ENCODE measurements at regions of chr19 and their contacts with region 1.

Region 1: GRCh38 chr19:3557461-3558248 is at the start of gene MFSD12:
- DNase-seq: peak; percentile 92 to 95 (median 92)
- H3K4me3 ChIP-seq: peak within 1 kb of the TSS; percentile 89 to 98 (median 90)
- H3K4me3 Mint-ChIP-seq: peak within 1 kb of the TSS; percentile 100
- H3K27ac ChIP-seq: peak within 1 kb of the TSS; percentile 96
- H3K27ac Mint-ChIP-seq: peak within 1 kb of the TSS; percentile 93 to 98 (median 96)
- H3K4me1 ChIP-seq: peaks cover 53 to 60% of the 10 kb centered on the region in 2 donors
- H3K4me1 Mint-ChIP-seq: peaks cover 52% of the 10 kb centered on the region
- H3K27me3 ChIP-seq: no peaks in the 10 kb centered on the region
- H3K27me3 Mint-ChIP-seq: peaks cover 0 to 4% (median 0%) of the 10 kb centered on the region in 3 donors
- CTCF ChIP-seq: no peak
- polyA plus RNA-seq, gene MFSD12: 47.9 to 150 (median 55.5) TPM

Region 2: DNA sequence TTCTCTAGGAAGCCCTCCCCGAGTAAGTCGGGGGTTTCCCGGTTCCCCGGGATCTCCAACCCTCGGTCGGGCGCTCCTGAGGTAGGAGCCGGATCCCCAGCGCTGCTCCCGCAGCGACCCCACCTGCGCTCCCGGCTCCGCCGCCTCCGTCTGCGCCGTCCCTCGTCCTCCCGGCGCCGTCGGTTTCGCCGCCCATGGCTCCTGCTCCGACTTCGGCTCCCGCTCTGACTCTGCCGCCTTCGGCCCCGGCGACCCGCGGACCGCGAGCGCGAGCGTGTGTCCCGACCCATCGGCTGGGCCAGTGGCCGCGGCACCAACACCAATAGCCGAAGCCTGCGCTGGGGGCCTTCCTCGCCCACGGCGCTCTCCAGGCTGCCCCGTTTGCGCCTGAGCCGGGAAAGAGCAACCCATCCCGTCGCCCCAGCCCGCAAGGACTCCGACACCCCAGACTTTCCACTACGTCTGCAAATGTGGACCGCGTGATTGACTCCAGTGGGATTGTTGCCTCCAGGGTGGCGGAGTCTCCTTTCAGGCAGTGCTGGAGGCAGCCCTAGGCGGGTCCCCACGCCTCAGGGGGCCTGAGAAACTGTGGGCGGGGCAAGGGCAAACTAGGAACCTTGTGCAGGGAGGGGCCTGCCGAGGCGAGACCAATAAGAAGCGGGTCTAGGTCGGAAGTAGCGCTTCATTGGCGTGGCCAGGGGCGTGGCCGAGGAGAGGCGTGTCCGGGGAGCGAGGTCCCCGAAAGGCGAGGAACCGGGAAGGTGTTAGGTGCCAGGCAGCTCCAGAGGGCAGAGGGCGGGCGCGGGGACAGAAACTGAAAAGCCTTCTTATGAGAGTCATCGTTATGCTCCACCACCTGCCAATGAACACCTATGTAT is 69.1 kb after region 1 on chr19 and contains the start of gene CACTIN:
- intact Hi-C with region 1: loop called in 1 of 2 experiments (anchors 5 kb)
- DNase-seq: peak; percentile 98
- H3K4me3 ChIP-seq: peak within 1 kb of the TSS; percentile 64 to 98 (median 92)
- H3K4me3 Mint-ChIP-seq: peak within 1 kb of the TSS; percentile 95 to 98
- H3K27ac ChIP-seq: peak within 1 kb of the TSS; percentile 87 to 91
- H3K27ac Mint-ChIP-seq: peak within 1 kb of the TSS; percentile 96 to 99 (median 99)
- H3K4me1 ChIP-seq: peaks cover 17 to 25% of the 10 kb centered on the region in 2 donors
- H3K4me1 Mint-ChIP-seq: peaks cover 21% of the 10 kb centered on the region
- H3K27me3 ChIP-seq: no peaks in the 10 kb centered on the region
- H3K27me3 Mint-ChIP-seq: no peaks in the 10 kb centered on the region
- CTCF ChIP-seq: no peak
- polyA plus RNA-seq, gene CACTIN: 2.5 to 19.4 (median 3.0) TPM

Region 3: DNA sequence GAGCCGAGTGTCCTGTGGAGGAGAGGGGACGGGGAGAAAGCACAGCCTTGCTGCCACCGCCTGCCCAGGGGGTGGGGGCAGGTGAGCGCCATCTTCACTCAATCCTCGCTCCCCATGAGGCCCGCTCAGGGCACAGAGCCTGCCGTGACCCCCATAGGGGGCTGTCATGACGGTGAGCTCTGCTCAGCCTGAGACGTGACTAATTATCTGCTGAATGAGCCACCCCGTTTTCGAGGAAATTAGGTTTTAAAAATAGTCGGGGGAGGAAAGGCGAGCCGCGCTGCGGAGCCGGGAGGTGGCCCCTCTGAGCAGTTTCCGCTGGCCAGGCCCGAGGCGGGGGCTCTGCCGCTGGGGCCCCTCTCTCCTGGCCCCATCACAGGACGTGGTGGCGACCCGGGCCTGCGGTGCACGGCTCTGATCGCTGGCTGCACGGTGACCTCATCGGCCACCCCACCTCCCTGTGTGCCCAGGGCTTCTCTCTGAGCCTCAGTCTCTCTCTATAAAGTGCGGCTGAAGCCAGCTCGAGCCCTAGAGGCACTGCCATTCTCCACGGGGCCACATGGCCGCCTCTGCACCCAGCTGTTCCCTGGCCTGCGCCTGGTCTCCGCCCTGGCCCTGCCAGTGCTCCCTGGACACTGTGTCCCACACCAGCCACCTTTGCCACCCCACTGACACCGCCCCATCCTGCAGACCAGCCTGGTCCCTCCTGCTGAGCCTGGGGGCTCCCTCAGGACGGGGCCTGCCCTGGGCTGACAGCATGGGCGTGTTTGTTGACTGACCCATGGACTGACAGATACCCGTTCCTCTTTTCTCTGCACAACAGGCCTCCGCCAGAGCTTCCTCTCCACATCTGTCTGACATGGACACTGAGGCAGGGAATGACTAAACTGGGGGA is 114.3 kb after region 1 on chr19:
- intact Hi-C with region 1: no loop called
- DNase-seq: peak; percentile 6 to 36 (median 15)
- H3K4me3 ChIP-seq: peak overlapping the region in 1 of 3 experiments; percentile 49
- H3K4me3 Mint-ChIP-seq: peak overlapping the region; percentile 65 to 76
- H3K27ac ChIP-seq: no peak overlapping the region
- H3K27ac Mint-ChIP-seq: peak overlapping the region in 1 of 7 donors; percentile 37
- H3K4me1 ChIP-seq: peaks cover 25% of the 10 kb centered on the region in 2 donors
- H3K4me1 Mint-ChIP-seq: peaks cover 24% of the 10 kb centered on the region
- H3K27me3 ChIP-seq: peaks cover 3 to 18% of the 10 kb centered on the region in 2 donors
- H3K27me3 Mint-ChIP-seq: peaks cover 13 to 29% (median 21%) of the 10 kb centered on the region in 3 donors
- CTCF ChIP-seq: no peak

Measured in CD14-positive monocyte (primary cell).